IMR-90 (cell line): ENCODE measurements at regions of chr2 and their contacts with region 1.

Region 1: DNA sequence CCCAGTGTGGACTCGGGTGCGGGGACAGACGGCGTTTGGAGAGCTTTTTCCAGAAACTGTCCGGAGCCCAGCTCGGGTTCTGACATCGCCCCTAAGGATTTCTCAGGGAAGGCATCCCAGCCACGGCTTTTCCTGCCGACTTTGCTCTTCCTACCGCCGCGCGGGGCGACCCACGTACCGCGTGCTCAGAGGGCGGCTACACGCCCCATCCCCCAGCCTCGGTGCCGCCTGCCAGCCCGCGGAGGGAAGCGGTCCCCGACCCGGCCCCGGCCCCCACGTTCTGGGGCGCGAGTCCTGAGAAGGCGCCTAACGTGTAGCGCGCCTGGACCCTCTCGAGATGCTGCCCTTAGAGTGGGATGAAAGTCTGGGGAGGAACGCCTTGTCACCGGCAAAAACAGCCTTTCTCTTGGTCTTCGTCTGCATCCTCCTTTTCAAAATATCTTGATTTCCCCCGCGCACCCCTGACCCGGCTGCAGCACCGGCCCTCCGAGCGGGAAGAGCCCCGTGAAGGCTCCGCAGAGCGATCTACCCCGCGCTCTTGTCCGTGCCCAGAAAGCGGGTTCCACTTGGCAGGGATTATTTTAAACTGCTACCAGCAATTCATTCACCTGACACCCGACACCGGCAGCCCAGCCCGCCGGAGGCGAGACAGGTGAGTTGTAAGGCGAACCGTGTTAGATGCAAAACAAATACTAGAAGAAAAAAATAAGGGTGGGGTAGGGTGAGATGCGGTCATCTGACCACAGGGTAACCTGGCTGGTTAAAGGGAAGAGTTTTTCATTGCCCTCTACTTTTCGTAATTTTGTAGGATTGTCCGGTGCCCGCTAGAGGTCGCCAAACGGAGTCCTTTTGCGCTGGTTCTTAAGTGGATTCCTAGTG is 812 bp upstream of the KCNG3 start:
- DNase-seq: peak; percentile 75
- ATAC-seq: peak; percentile 72
- H3K4me3 ChIP-seq: peak overlapping the region; percentile 31
- H3K27ac ChIP-seq: no peak overlapping the region
- H3K4me1 ChIP-seq: no peaks in the 10 kb centered on the region
- H3K27me3 ChIP-seq: peaks cover 52% of the 10 kb centered on the region
- CTCF ChIP-seq: peak; percentile 86
- POLR2A ChIP-seq: no peak
- RAD21 ChIP-seq: peak; percentile 76

Region 2: GRCh38 chr2:42568401-42569115 is 74.0 kb after region 1 on chr2 and contains the start of gene MTA3:
- CTCF ChIA-PET with region 1: interaction called, 4 read pairs
- POLR2A ChIA-PET with region 1: no interaction called
- dilution Hi-C with region 1: no loop called
- in situ Hi-C with region 1: no loop called
- intact Hi-C with region 1: loop called (anchors 5 kb)
- DNase-seq: no peak
- ATAC-seq: peak; percentile 74
- H3K4me3 ChIP-seq: peak within 1 kb of the TSS; percentile 91
- H3K27ac ChIP-seq: peak within 1 kb of the TSS; percentile 93
- H3K4me1 ChIP-seq: peaks cover 11% of the 10 kb centered on the region
- H3K27me3 ChIP-seq: no peaks in the 10 kb centered on the region
- CTCF ChIP-seq: no peak
- POLR2A ChIP-seq: no peak
- RAD21 ChIP-seq: no peak
- total RNA-seq, gene MTA3: 31.9 and 39.7 TPM in 2 replicates

Region 3: GRCh38 chr2:42895134-42895790 is 400.7 kb after region 1 on chr2:
- CTCF ChIA-PET with region 1: no interaction called
- POLR2A ChIA-PET with region 1: no interaction called
- dilution Hi-C with region 1: no loop called
- in situ Hi-C with region 1: no loop called
- intact Hi-C with region 1: no loop called
- DNase-seq: peak; percentile 34
- ATAC-seq: no peak
- H3K4me3 ChIP-seq: no peak overlapping the region
- H3K27ac ChIP-seq: no peak overlapping the region
- H3K4me1 ChIP-seq: peaks cover 4% of the 10 kb centered on the region; the same call in 1 of the 2 replicates
- H3K27me3 ChIP-seq: no peaks in the 10 kb centered on the region
- CTCF ChIP-seq: no peak
- POLR2A ChIP-seq: no peak
- RAD21 ChIP-seq: no peak

Region 4: DNA sequence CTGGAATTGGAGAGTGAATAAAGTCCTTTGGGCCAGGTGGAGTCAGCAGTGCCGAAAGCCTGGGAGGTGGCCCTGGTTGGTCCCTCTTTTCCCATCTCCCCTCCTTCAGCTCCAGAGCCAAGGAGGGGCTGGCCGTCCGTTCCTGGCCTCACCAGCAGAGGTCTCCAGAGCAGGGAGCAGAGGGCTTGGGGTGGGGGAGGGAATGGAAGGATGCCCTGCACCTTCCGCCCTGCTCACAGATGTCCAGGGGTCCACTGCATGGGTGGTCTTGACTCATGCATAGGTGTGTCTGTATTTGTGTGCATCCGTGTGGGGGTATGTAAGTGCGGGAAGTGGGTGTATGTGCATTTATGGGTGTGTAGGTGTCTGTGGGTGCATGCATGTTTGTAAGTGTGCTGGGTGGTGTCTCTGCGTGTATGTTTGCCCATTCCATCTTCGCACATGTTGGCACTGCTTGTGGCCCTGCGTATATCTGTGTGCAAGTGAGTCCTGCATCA is 530.0 kb after region 1 on chr2:
- CTCF ChIA-PET with region 1: no interaction called
- POLR2A ChIA-PET with region 1: no interaction called
- dilution Hi-C with region 1: no loop called
- in situ Hi-C with region 1: no loop called
- intact Hi-C with region 1: no loop called
- DNase-seq: peak; percentile 55
- ATAC-seq: peak; percentile 90
- H3K4me3 ChIP-seq: no peak overlapping the region
- H3K27ac ChIP-seq: no peak overlapping the region
- H3K4me1 ChIP-seq: peaks cover 6% of the 10 kb centered on the region
- H3K27me3 ChIP-seq: no peaks in the 10 kb centered on the region
- CTCF ChIP-seq: peak; percentile 71
- POLR2A ChIP-seq: no peak
- RAD21 ChIP-seq: peak; percentile 86